ENCODE measurements at regions of chr2 and their contacts with region 1.

Region 1: GRCh38 chr2:42828487-42829425 is 36.4 kb upstream of the HAAO start:
- DNase-seq: no peak
- H3K4me3 ChIP-seq: no peak overlapping the region
- H3K27ac ChIP-seq: peak overlapping the region; percentile 19 to 65 (median 44)
- H3K4me1 ChIP-seq: peaks cover 24 to 40% (median 38%) of the 10 kb centered on the region in 4 donors
- H3K27me3 ChIP-seq: no peaks in the 10 kb centered on the region
- CTCF ChIP-seq: peak; percentile 93 to 94 (median 93)
- EP300 ChIP-seq: no peak
- POLR2A ChIP-seq: no peak

Region 2: GRCh38 chr2:42944779-42945415 is 116.1 kb after region 1 on chr2:
- intact Hi-C with region 1: loop called (anchors 5 kb)
- DNase-seq: no peak
- H3K4me3 ChIP-seq: no peak overlapping the region
- H3K27ac ChIP-seq: no peak overlapping the region
- H3K4me1 ChIP-seq: peaks cover 9 to 18% (median 16%) of the 10 kb centered on the region in 4 donors
- H3K27me3 ChIP-seq: no peaks in the 10 kb centered on the region
- CTCF ChIP-seq: no peak
- EP300 ChIP-seq: no peak
- POLR2A ChIP-seq: no peak

Region 3: GRCh38 chr2:43051316-43051715 is 222.6 kb after region 1 on chr2:
- intact Hi-C with region 1: no loop called
- DNase-seq: no peak
- H3K4me3 ChIP-seq: no peak overlapping the region
- H3K27ac ChIP-seq: no peak overlapping the region
- H3K4me1 ChIP-seq: peaks cover 10 to 15% (median 13%) of the 10 kb centered on the region in 4 donors
- H3K27me3 ChIP-seq: no peaks in the 10 kb centered on the region
- CTCF ChIP-seq: no peak
- EP300 ChIP-seq: no peak
- POLR2A ChIP-seq: no peak

Region 4: GRCh38 chr2:43131024-43131889 is 302.5 kb after region 1 on chr2:
- intact Hi-C with region 1: loop called (anchors 10 kb)
- DNase-seq: peak; percentile 95
- H3K4me3 ChIP-seq: no peak overlapping the region
- H3K27ac ChIP-seq: peak overlapping the region; percentile 38 to 68 (median 63)
- H3K4me1 ChIP-seq: peaks cover 31 to 75% (median 68%) of the 10 kb centered on the region in 4 donors
- H3K27me3 ChIP-seq: no peaks in the 10 kb centered on the region
- CTCF ChIP-seq: peak; percentile 37 to 47 (median 45)
- EP300 ChIP-seq: no peak
- POLR2A ChIP-seq: no peak

Region 5: DNA sequence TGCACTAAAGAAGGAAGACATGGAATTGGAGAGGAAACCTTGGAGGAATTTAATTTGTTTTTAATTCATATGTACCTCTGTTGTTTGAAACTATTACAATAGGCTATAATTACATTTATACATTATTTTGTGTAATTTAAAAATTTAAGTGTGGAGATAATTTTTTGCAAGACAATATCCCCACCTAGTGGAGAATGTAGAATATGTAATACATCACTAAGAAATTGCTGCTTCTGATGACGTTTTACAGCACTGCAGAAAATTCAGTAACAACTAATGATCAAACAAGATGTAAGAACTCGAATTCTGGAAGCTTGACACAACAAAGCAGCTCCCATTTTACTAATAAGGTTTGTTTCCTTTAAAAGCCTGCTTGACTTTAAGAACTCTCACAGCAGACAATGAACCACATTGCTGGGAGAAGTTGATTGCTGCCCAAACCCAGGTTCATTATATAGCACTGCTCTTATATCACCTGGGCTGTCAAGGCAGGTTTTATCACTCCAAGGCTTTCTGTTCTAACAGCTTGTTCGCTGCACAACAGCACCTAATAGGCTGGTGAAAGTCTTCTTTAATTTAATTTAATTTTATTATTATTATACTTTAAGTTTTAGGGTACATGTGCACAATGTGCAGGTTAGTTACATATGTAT is 713.7 kb after region 1 on chr2:
- intact Hi-C with region 1: loop called (anchors 5 kb)
- DNase-seq: no peak
- H3K4me3 ChIP-seq: no peak overlapping the region
- H3K27ac ChIP-seq: no peak overlapping the region
- H3K4me1 ChIP-seq: peaks cover 3 to 34% (median 24%) of the 10 kb centered on the region in 4 donors
- H3K27me3 ChIP-seq: no peaks in the 10 kb centered on the region
- CTCF ChIP-seq: peak; percentile 58 to 71 (median 65)
- EP300 ChIP-seq: no peak
- POLR2A ChIP-seq: no peak

Region 6: GRCh38 chr2:43576981-43577892 is 748.5 kb after region 1 on chr2:
- intact Hi-C with region 1: loop called (anchors 10 kb)
- DNase-seq: no peak
- H3K4me3 ChIP-seq: no peak overlapping the region
- H3K27ac ChIP-seq: peak overlapping the region; percentile 26 to 46 (median 37)
- H3K4me1 ChIP-seq: peaks cover 4 to 14% (median 12%) of the 10 kb centered on the region in 4 donors
- H3K27me3 ChIP-seq: no peaks in the 10 kb centered on the region
- CTCF ChIP-seq: peak; percentile 70 to 80 (median 74)
- EP300 ChIP-seq: no peak
- POLR2A ChIP-seq: no peak

Measured in esophagus muscularis mucosa (tissue), 4 donors.